Head of caudate nucleus (tissue), 42 donors: ENCODE measurements at regions of chr9 and their contacts with region 1.

Region 1: GRCh38 chr9:13588151-13589033 is 308.9 kb upstream of the MPDZ start:
- DNase-seq: peak in 16 of 42 donors; percentile 16 to 59 (median 30)

Region 2: GRCh38 chr9:13446938-13447842 is 141.2 kb before region 1 on chr9:
- intact Hi-C with region 1: loop called (anchors 5 kb)
- DNase-seq: no peak

Region 3: DNA sequence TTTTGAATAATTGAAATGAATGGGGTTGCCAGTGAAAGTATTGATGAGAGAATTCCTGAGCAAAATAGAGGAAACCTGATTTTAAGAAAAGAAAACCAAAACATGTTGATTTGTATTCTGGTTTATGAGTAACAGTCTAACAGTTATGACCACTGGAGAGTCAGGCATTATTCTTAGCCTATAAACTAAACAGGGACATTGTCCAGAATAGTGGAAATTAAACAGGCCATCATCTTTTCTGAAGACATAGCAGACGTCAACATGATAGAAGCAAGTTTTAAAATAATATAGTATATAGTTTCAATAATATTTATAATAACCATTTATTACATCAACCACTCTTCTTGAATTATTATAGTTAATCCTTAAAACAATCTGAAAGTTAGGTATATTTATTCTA is 130.6 kb before region 1 on chr9:
- intact Hi-C with region 1: no loop called
- DNase-seq: no peak

Region 4: GRCh38 chr9:13568841-13569601 is 19.4 kb before region 1 on chr9:
- intact Hi-C with region 1: loop called (anchors 2 kb)
- DNase-seq: peak; percentile 26 to 77 (median 59)